Mammary epithelial cell (primary cell): ENCODE measurements at regions of chr6 and their contacts with region 1.

Region 1: GRCh38 chr6:43496370-43497128 is 13.6 kb downstream of the LRRC73 start:
- DNase-seq: peak; percentile 94
- H3K4me3 ChIP-seq: peak overlapping the region in 2 of 3 experiments; percentile 11 to 22
- H3K27ac ChIP-seq: peak overlapping the region; percentile 78
- H3K4me1 ChIP-seq: peaks cover 58% of the 10 kb centered on the region
- H3K27me3 ChIP-seq: no peaks in the 10 kb centered on the region
- CTCF ChIP-seq: peak; percentile 82 to 89

Region 2: DNA sequence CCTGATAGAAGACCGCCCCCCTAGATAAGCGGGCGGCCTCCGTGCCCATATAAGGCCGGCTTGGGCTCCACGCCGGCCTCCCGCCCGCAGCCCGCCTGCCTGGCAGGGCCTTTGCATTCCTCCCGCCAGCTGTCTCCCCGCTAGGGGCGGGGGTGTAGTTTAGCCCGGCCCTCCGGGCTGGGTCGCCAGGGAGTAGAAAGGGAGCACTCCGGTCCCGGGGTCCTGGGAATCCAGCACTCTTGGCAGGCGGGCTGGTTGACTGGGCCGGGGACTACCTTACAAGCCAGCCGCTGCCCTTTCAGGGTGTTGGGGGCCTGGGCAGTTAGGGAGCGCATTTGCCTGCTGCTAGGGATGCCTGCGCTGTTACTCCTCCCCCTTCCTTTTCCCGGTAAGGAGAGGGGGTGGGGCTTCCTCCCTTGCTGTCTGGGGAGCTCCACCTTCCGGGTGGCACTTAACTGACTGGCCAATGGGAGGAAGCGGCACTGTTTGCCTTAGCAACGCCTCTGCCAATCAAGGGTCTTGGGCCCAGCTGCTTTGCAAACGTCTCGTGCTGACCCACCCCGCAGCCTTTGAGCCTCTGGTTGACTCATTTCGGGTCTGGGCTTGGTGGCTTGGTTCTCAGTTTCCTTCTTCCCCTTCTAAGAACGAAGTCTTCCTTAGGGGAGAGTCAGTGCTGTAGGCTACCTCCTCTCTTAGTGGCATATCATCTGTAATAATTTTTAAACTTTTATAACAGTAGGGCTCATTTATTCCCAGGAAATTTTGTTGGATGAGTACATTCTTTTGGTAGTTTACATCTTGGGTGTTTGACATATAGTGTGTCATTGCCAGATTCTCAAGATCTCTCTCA is 322.1 kb before region 1 on chr6:
- CTCF ChIA-PET with region 1: interaction called, 5 read pairs
- dilution Hi-C with region 1: no loop called
- in situ Hi-C with region 1: no loop called
- intact Hi-C with region 1: loop called (anchors 5 kb)
- DNase-seq: peak; percentile 98
- H3K4me3 ChIP-seq: peak overlapping the region in 2 of 3 experiments; percentile 69 to 73
- H3K27ac ChIP-seq: peak overlapping the region; percentile 89
- H3K4me1 ChIP-seq: peaks cover 24% of the 10 kb centered on the region
- H3K27me3 ChIP-seq: no peaks in the 10 kb centered on the region
- CTCF ChIP-seq: peak in 1 of 2 donors; percentile 19

Region 3: GRCh38 chr6:43334466-43335095 is 162.0 kb before region 1 on chr6:
- CTCF ChIA-PET with region 1: no interaction called
- dilution Hi-C with region 1: no loop called
- in situ Hi-C with region 1: no loop called
- intact Hi-C with region 1: loop called (anchors 1 kb)
- DNase-seq: peak; percentile 47
- H3K4me3 ChIP-seq: no peak overlapping the region
- H3K27ac ChIP-seq: no peak overlapping the region
- H3K4me1 ChIP-seq: no peaks in the 10 kb centered on the region
- H3K27me3 ChIP-seq: no peaks in the 10 kb centered on the region
- CTCF ChIP-seq: peak; percentile 58 to 67

Region 4: GRCh38 chr6:43369174-43370022 is 127.2 kb before region 1 on chr6 and contains the start of gene ZNF318:
- CTCF ChIA-PET with region 1: interaction called, 10 read pairs
- dilution Hi-C with region 1: no loop called
- in situ Hi-C with region 1: no loop called
- intact Hi-C with region 1: loop called (anchors 2 kb)
- DNase-seq: peak; percentile 98
- H3K4me3 ChIP-seq: peak within 1 kb of the TSS; percentile 55 to 92 (median 76)
- H3K27ac ChIP-seq: peak within 1 kb of the TSS; percentile 83
- H3K4me1 ChIP-seq: peaks cover 32% of the 10 kb centered on the region
- H3K27me3 ChIP-seq: no peaks in the 10 kb centered on the region
- CTCF ChIP-seq: no peak
- total RNA-seq, gene ZNF318: 14.8 to 15.9 TPM

Region 5: DNA sequence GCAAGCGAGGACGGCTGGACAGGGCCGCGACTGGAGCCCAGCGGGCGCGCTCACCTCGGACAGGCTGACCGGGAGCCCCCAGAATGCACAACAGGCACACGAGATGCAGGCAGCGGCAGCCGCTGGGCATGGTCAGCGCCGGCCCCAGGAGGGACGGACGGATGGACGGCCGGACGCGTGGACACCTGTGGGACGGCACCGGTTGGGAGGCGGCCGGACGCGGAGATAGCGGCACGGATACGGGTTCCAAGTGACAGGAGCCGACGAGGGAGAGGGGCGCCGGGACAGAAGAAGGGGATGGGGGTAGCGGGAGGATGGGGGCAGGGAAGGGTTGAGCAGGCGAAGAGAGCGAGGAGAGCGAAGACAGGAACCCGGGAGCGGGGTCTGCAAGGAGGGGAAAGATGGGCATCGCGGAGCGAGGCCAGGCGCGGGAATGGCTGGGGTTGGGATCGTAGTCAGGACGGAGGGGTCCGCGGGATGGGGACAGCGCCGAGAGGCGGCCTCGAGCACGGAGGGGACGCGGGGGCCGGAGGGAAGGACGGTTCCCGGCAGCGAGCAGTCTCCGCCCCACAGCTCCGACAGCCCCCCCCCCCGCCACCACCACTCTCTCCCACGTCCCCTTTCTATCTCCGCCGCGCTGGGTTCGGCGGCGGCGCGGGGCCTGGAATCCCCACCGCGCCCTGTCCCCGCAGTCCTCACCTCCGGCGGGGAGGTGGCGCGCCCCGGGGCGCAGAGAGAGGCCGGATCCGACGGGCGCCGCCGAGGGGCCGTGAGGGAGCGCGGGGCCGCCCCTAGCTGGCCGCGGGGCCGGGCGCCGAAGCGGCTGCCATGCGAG is 41.6 kb before region 1 on chr6:
- CTCF ChIA-PET with region 1: interaction called, 10 read pairs
- dilution Hi-C with region 1: no loop called
- in situ Hi-C with region 1: loop called (anchors 5 kb)
- intact Hi-C with region 1: loop called (anchors 1 kb)
- DNase-seq: no peak
- H3K4me3 ChIP-seq: peak overlapping the region; percentile 53 to 74 (median 62)
- H3K27ac ChIP-seq: no peak overlapping the region
- H3K4me1 ChIP-seq: peaks cover 13% of the 10 kb centered on the region
- H3K27me3 ChIP-seq: no peaks in the 10 kb centered on the region
- CTCF ChIP-seq: no peak

Region 6: GRCh38 chr6:43758617-43759050 is 262.1 kb after region 1 on chr6:
- CTCF ChIA-PET with region 1: no interaction called
- dilution Hi-C with region 1: no loop called
- in situ Hi-C with region 1: no loop called
- intact Hi-C with region 1: no loop called
- DNase-seq: no peak
- H3K4me3 ChIP-seq: no peak overlapping the region
- H3K27ac ChIP-seq: no peak overlapping the region
- H3K4me1 ChIP-seq: no peaks in the 10 kb centered on the region
- H3K27me3 ChIP-seq: no peaks in the 10 kb centered on the region
- CTCF ChIP-seq: peak; percentile 27 to 65

Region 7: GRCh38 chr6:43774776-43775534 is 278.4 kb after region 1 on chr6:
- CTCF ChIA-PET with region 1: no interaction called
- dilution Hi-C with region 1: no loop called
- in situ Hi-C with region 1: no loop called
- intact Hi-C with region 1: no loop called
- DNase-seq: peak; percentile 69
- H3K4me3 ChIP-seq: peak overlapping the region; percentile 97 to 98 (median 98)
- H3K27ac ChIP-seq: peak overlapping the region; percentile 14
- H3K4me1 ChIP-seq: peaks cover 22% of the 10 kb centered on the region
- H3K27me3 ChIP-seq: no peaks in the 10 kb centered on the region
- CTCF ChIP-seq: peak; percentile 83 to 94